ENCODE measurements at regions of chr5 and their contacts with region 1.

Region 1: DNA sequence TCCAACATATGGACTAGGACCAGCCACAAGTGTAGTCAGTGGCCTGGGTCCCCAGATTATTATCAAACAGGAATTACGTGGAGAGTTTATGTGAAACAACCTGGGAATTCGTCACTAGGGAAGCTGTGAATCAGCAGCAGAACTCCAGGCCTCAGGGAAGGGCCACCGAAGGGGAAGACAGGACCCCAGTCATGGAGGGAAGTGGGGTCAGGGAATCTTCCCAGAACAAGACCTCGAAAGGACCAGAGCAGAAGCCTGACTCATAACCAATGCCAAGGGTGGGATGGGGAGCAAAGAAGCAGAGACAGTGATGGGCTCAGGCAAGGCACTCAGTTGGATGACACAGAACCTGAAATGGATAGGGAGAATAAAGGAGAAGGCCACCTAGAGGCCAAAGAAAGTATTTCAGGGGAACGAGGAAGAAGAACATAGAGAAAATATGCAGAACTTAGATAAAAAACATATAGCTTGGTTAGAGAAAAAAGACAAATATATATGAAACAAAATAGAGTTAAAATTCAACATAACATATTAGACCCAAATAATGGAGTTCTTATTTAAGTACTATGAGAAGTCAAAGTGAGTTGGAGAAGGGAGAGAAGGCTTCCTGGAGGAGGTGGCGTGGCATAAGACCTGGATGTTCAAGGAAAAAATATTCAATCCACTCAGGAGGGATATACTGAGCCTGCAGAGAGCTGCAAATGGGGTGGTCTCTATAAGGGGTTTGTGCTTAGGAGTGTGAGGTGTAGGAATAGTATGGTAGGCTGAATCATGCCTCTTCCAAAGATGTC is 66.7 kb upstream of the CAST start:
- DNase-seq: peak in 1 of 2 experiments; percentile 55
- H3K4me3 ChIP-seq: no peak overlapping the region
- H3K27ac ChIP-seq: no peak overlapping the region
- H3K4me1 ChIP-seq: no peaks in the 10 kb centered on the region
- H3K27me3 ChIP-seq: no peaks in the 10 kb centered on the region
- CTCF ChIP-seq: peak in 2 of 3 experiments; percentile 43 to 51; a peak in 2 of 4 replicates
- EP300 ChIP-seq: no peak
- POLR2A ChIP-seq: no peak
- RAD21 ChIP-seq: peak; percentile 40 to 54

Region 2: GRCh38 chr5:96344678-96345577 is 250.6 kb before region 1 on chr5:
- CTCF ChIA-PET with region 1: interaction called, 118 read pairs
- POLR2A ChIA-PET with region 1: no interaction called
- DNase-seq: no peak
- H3K4me3 ChIP-seq: no peak overlapping the region
- H3K27ac ChIP-seq: no peak overlapping the region
- H3K4me1 ChIP-seq: no peaks in the 10 kb centered on the region
- H3K27me3 ChIP-seq: no peaks in the 10 kb centered on the region
- CTCF ChIP-seq: peak in 2 of 3 experiments; percentile 66 to 72; a peak in 3 of 4 replicates
- EP300 ChIP-seq: no peak
- POLR2A ChIP-seq: no peak
- RAD21 ChIP-seq: peak; percentile 91 to 94

Region 3: DNA sequence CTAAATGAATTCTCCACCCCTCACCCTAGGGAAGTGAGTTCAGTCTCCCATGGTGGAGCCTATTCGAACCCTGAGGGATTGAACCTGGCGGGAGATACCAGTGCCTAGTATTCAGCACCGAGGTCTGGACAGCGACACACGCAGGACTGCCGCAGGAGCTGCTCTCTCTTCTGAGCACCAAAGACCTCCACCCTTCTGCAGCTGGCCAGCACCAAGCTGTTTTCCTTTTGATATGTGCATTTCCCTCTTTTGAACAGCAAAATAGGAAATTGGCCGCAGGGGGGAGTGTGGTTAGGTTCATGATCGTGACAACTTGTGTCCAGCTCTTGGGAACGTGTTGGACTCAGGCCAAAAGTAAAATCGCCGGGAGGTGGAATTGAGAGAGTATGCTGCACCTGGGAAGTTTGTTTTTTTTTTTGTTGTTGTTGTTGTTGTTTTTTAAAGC is 161.3 kb before region 1 on chr5:
- CTCF ChIA-PET with region 1: interaction called, 19 read pairs
- POLR2A ChIA-PET with region 1: no interaction called
- DNase-seq: peak in 1 of 2 experiments; percentile 87
- H3K4me3 ChIP-seq: peak overlapping the region; percentile 4 to 86 (median 34); a peak in 6 of 8 replicates
- H3K27ac ChIP-seq: no peak overlapping the region
- H3K4me1 ChIP-seq: peaks cover 0 to 9% (median 5%) of the 10 kb centered on the region in 4 experiments; a peak in 4 of 7 replicates
- H3K27me3 ChIP-seq: peaks cover 4 to 37% (median 33%) of the 10 kb centered on the region in 4 experiments
- CTCF ChIP-seq: peak in 1 of 3 experiments; percentile 5; a peak in 1 of 4 replicates
- EP300 ChIP-seq: no peak
- POLR2A ChIP-seq: no peak
- RAD21 ChIP-seq: peak; percentile 25 to 26

Region 4: DNA sequence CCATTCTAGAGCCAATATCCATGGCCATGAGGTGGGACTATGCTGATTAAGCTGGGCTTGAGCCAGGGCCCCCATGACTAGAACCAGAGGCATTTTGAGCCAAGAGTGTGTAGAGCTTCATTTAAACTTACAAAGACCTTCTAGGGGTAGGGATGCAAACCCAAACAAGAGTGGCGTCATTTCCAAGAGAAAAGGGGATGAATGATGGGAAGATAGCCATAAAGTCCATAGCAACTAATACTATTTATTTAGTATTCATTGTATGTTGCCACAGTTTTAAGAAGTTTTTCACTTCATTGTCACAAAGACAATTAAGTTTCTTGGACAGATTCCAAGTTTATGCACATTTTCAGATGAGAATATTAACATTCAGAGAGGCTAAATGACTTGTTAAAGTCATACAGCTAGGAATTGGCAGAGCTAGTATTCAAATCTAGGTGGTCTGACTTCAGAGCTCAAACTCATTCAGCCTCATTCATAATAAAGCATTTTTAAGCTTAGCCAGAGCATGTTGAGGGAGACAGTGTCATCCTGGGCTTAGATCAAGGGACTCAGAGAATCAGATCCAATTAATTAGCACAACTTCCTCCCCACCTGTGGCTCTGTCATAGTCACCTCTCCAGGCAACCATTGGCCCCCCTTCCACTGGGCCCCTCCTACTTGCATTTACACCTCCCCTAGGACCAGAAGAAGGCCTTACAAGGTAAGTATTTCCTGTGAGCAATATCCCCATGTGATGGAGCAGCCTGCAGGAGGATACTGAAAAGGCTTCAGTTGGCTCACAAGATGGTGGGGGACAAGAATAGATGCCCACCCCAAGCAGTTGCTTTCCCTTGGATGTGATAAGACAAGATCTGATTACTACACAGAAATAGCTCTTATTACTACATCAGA is 67.5 kb before region 1 on chr5:
- CTCF ChIA-PET with region 1: no interaction called
- POLR2A ChIA-PET with region 1: no interaction called
- DNase-seq: no peak
- H3K4me3 ChIP-seq: no peak overlapping the region
- H3K27ac ChIP-seq: no peak overlapping the region
- H3K4me1 ChIP-seq: no peaks in the 10 kb centered on the region
- H3K27me3 ChIP-seq: no peaks in the 10 kb centered on the region
- CTCF ChIP-seq: no peak
- EP300 ChIP-seq: no peak
- POLR2A ChIP-seq: no peak
- RAD21 ChIP-seq: no peak

Region 5: GRCh38 chr5:96572864-96573512 is 22.5 kb before region 1 on chr5:
- CTCF ChIA-PET with region 1: interaction called, 25 read pairs
- POLR2A ChIA-PET with region 1: no interaction called
- DNase-seq: no peak
- H3K4me3 ChIP-seq: no peak overlapping the region
- H3K27ac ChIP-seq: no peak overlapping the region
- H3K4me1 ChIP-seq: no peaks in the 10 kb centered on the region
- H3K27me3 ChIP-seq: no peaks in the 10 kb centered on the region
- CTCF ChIP-seq: no peak
- EP300 ChIP-seq: no peak
- POLR2A ChIP-seq: no peak
- RAD21 ChIP-seq: no peak

Region 6: DNA sequence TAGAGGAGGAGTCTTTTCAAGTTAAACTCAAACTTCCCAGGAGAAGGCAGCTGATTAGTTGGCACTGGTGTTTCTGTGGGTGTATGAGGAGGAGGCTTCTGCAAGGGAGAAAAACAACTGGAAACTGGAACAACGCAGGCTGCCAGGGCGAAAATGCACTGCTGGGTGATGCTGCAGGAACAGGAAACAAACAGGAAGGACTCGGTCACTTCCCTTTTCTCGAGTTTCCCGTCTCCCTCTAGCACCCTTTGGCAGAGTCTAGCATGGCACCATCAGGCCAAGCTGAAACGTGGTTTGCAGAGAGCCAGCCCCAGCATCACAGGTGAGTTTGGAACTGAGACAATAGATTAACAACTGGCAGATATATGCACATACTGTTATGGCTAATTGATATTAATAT is 10.8 kb before region 1 on chr5:
- CTCF ChIA-PET with region 1: interaction called, 36 read pairs
- POLR2A ChIA-PET with region 1: no interaction called
- DNase-seq: no peak
- H3K4me3 ChIP-seq: no peak overlapping the region
- H3K27ac ChIP-seq: no peak overlapping the region
- H3K4me1 ChIP-seq: no peaks in the 10 kb centered on the region
- H3K27me3 ChIP-seq: no peaks in the 10 kb centered on the region
- CTCF ChIP-seq: no peak
- EP300 ChIP-seq: no peak
- POLR2A ChIP-seq: no peak
- RAD21 ChIP-seq: no peak

Region 7: DNA sequence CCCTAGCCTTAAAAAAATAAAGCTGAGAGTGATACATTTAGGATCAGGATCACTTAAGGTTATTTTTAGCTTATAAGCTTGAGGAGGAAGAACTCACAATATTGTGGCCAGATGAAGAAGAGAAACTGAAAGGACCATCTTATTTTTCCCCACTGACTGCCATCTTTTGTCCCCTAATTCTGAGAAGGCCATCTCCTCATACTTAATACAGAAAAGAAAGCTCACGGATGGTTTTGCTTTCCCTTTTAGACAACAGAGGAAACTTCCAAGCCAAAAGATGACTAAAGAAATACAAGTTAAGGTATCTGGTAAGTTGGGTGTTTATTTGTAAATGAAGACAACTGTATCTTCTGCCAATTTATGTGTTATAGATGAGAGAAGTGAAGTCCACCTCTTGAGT is 175.9 kb after region 1 on chr5:
- CTCF ChIA-PET with region 1: no interaction called
- POLR2A ChIA-PET with region 1: no interaction called
- DNase-seq: no peak
- H3K4me3 ChIP-seq: no peak overlapping the region
- H3K27ac ChIP-seq: no peak overlapping the region
- H3K4me1 ChIP-seq: no peaks in the 10 kb centered on the region
- H3K27me3 ChIP-seq: no peaks in the 10 kb centered on the region
- CTCF ChIP-seq: no peak
- EP300 ChIP-seq: no peak
- POLR2A ChIP-seq: no peak
- RAD21 ChIP-seq: no peak

Region 8: DNA sequence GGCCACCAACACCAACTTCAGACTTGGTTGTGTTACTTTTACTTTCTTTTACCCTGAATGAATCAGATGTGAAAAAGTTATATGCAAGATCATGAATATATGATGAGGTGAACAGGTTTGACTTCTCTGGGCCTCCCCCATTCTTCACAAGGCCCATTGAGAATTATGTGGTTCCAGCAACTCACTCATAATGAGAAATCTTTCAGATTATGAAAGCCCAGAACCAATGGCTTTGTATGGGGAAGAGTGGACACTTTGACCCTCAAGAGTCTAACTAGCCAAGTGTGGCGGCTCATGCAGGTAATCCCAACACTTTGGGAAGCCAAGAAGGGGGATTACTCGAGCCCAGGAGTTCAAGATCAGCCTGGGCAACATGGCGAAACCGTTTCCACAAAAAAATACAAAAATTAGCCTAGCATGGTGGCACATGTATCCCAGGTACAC is 324.3 kb after region 1 on chr5:
- CTCF ChIA-PET with region 1: no interaction called
- POLR2A ChIA-PET with region 1: no interaction called
- DNase-seq: no peak
- H3K4me3 ChIP-seq: no peak overlapping the region
- H3K27ac ChIP-seq: no peak overlapping the region
- H3K4me1 ChIP-seq: peaks cover 0 to 4% (median 3%) of the 10 kb centered on the region in 4 experiments; a peak in 4 of 7 replicates
- H3K27me3 ChIP-seq: no peaks in the 10 kb centered on the region
- CTCF ChIP-seq: no peak
- EP300 ChIP-seq: no peak
- POLR2A ChIP-seq: no peak
- RAD21 ChIP-seq: no peak

Measured in H1 (cell line).